GM13977 (cell line): ENCODE measurements at regions of chr19 and their contacts with region 1.

Region 1: GRCh38 chr19:11125994-11126685 is 29.4 kb downstream of the SPC24 start:
- DNase-seq: peak; percentile 71
- CTCF ChIP-seq: peak; percentile 83

Region 2: GRCh38 chr19:11011668-11012067 is 114.5 kb before region 1 on chr19:
- in situ Hi-C with region 1: no loop called
- DNase-seq: no peak
- CTCF ChIP-seq: peak; percentile 8

Region 3: GRCh38 chr19:11023016-11023415 is 103.1 kb before region 1 on chr19:
- in situ Hi-C with region 1: no loop called
- DNase-seq: no peak
- CTCF ChIP-seq: no peak

Region 4: GRCh38 chr19:11035441-11036377 is 90.4 kb before region 1 on chr19:
- in situ Hi-C with region 1: loop called (anchors 10 kb)
- DNase-seq: peak; percentile 93
- CTCF ChIP-seq: peak; percentile 95

Region 5: GRCh38 chr19:11242864-11243797 is 117.0 kb after region 1 on chr19:
- in situ Hi-C with region 1: no loop called
- DNase-seq: peak; percentile 98
- CTCF ChIP-seq: peak; percentile 60